ENCODE measurements at regions of chr19 and their contacts with region 1.

Region 1: DNA sequence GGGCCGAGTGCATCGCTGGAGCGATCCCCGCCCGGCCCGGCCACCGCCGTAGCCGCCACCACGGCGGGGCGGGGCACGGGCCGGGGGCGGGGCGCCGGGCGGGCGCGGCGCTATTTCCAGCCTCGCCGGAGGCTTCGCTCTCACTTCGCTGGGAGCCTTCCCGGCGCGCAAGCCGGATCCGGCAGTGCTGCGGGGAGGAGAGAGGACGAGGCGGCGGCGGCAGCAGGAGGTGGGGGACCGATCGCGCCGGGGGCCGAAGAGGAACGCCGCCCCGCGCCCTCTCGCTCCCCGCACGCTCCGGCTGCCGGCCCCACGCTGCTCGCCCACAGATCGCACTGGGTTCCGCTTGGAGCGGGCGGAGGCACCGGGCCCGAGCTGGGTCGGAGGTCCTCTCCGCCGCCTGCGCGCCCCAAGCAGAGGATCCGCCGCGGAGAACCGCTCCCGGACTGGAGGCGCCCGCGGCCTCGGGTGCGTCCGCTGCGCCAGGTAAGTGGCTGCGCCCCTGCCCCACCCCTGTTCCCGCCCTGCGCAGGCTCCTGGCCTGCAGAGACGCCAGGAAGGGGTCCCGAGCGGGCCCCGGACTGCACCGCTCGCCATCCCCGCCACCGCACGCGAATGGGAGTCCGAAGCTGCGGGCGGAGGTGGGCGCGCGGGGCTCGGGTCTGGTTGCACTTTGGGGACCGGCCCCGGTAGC is at the start of gene CHST8:
- DNase-seq: peak; percentile 46
- H3K27ac ChIP-seq: no peak within 1 kb of the TSS
- CTCF ChIP-seq: no peak

Region 2: GRCh38 chr19:32859591-32859990 is 762.4 kb before region 1 on chr19:
- CTCF ChIA-PET with region 1: no interaction called
- POLR2A ChIA-PET with region 1: interaction called, 10 read pairs
- DNase-seq: no peak
- H3K27ac ChIP-seq: no peak overlapping the region
- CTCF ChIP-seq: no peak

Region 3: GRCh38 chr19:33603377-33603776 is 18.6 kb before region 1 on chr19:
- CTCF ChIA-PET with region 1: no interaction called
- POLR2A ChIA-PET with region 1: no interaction called
- DNase-seq: no peak
- H3K27ac ChIP-seq: no peak overlapping the region
- CTCF ChIP-seq: no peak

Measured in RWPE1 (cell line).